Right cardiac atrium (tissue), 5 donors: ENCODE measurements at regions of chr15 and their contacts with region 1.

Region 1: GRCh38 chr15:59492389-59493377 is 54.7 kb downstream of the FAM81A start:
- DNase-seq: peak; percentile 47 to 79 (median 72)
- ATAC-seq: peak; percentile 93 to 95
- H3K4me3 ChIP-seq: no peak overlapping the region
- H3K27ac ChIP-seq: no peak overlapping the region
- H3K4me1 ChIP-seq: no peaks in the 10 kb centered on the region
- H3K27me3 ChIP-seq: no peaks in the 10 kb centered on the region

Region 2: DNA sequence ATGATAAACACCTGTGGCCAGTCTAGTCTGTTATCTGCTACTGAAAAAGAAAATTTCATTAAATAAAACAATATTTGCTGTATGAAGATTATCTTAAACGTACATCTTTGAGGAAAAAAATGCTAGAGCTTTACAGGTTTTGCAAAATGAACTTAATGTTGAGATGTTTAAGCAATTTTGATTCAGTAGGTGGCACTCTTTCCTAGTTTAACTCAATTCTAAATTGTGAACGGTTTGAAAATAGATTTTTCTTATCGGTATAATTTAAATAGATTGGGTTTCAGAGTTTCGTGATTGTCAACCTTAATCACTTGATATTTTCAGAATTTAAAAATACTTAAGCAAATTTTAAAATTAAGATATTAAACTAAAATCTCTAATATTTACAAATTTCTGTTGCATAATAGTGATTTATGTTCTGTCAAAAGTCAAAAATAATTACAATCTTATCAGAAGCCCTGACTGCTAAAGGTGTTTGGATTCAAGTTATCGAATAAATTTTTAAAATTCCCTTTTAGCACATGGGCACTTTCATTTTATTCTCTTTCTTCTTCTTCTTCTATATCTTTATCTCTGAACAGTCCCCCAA is 512.2 kb before region 1 on chr15:
- intact Hi-C with region 1: loop called (anchors 2 to 10 kb)
- DNase-seq: no peak
- ATAC-seq: no peak
- H3K4me3 ChIP-seq: no peak overlapping the region
- H3K27ac ChIP-seq: no peak overlapping the region
- H3K4me1 ChIP-seq: no peaks in the 10 kb centered on the region
- H3K27me3 ChIP-seq: no peaks in the 10 kb centered on the region

Region 3: GRCh38 chr15:58987489-58988005 is 505.1 kb before region 1 on chr15 and contains the start of gene RNF111:
- intact Hi-C with region 1: loop called in 2 of 4 experiments (anchors 5 to 10 kb)
- DNase-seq: peak; percentile 87 to 95 (median 94)
- ATAC-seq: peak; percentile 97 to 98
- H3K4me3 ChIP-seq: peak within 1 kb of the TSS; percentile 71
- H3K27ac ChIP-seq: peak within 1 kb of the TSS; percentile 85
- H3K4me1 ChIP-seq: no peaks in the 10 kb centered on the region
- H3K27me3 ChIP-seq: no peaks in the 10 kb centered on the region
- total RNA-seq, gene RNF111: 22.6 to 29.4 (median 25.0) TPM

Region 4: GRCh38 chr15:59160880-59161593 is 331.6 kb before region 1 on chr15:
- intact Hi-C with region 1: loop called in 2 of 4 experiments (anchors 5 to 10 kb)
- DNase-seq: no peak
- ATAC-seq: no peak
- H3K4me3 ChIP-seq: no peak overlapping the region
- H3K27ac ChIP-seq: no peak overlapping the region
- H3K4me1 ChIP-seq: no peaks in the 10 kb centered on the region
- H3K27me3 ChIP-seq: no peaks in the 10 kb centered on the region

Region 5: DNA sequence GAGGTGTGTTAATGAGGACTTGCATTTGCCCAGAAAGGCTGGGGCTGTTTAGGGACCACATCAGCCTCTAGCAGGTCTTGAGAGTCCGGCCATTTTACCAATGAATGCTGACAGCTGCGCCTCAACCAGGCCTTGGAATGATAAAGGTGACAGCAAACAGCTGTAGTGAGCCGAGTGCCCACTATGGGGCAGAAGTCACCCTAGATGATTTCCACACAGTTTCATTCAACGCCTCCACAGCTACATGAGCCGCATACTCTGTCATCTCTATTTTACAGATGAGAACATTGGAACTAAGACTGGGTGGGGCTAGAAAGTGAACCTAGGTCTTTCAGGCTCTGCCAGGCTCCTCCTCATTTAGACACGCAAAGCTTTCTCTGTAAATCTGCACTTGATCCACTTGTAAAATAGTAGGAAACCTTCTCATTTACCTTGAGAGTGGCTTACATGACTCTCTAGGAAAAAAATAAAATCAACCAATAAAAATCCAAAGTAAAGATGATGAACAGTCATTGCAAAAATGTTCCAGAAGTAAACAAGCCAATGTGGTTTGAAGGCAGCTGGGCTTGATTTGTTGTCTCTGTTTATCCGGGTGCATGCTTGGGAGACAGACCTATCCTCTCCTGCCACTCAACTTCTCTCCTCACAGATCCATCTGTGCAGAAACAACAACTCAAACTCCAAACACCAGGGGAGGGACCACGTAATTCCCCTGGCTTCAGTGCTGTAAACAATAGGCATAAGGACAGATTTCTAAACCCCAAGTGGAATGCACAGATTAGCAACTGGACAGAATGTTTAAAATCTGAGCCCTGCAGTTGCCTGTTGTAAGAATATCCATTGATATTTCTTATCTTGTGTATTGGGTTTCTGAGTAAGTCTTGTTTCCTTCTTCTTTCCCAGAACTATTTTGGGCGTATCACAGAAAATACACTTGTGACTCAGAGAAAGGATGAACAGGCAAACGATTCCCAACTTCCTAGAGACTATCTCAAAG is 317.6 kb before region 1 on chr15:
- intact Hi-C with region 1: loop called in 1 of 4 experiments (anchors 10 kb)
- DNase-seq: peak; percentile 39 to 75 (median 72)
- ATAC-seq: peak; percentile 86 to 89
- H3K4me3 ChIP-seq: no peak overlapping the region
- H3K27ac ChIP-seq: no peak overlapping the region
- H3K4me1 ChIP-seq: peaks cover 2% of the 10 kb centered on the region
- H3K27me3 ChIP-seq: no peaks in the 10 kb centered on the region

Region 6: DNA sequence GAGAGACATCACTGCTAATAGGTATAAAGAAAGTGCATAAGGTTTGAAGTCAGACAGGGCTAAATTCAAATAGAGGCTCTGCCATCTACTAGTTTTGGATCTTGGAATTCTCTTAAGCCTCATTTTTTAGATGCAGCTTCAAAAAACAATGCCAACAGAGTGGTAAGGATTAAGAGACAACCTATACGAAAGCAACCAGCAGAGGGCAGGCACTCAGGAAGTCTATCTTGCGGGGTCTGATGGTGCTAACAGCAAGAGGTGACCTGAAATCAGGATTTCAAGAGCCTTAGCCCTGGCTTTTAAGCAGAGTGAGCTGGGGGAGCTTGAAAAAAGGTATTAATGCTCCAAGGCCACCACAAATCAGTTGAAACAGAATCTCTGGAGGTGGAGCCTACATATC is 245.3 kb before region 1 on chr15:
- intact Hi-C with region 1: loop called in 3 of 4 experiments (anchors 5 to 10 kb)
- DNase-seq: peak in 2 of 3 donors; percentile 28 to 60
- ATAC-seq: peak; percentile 72 to 82
- H3K4me3 ChIP-seq: no peak overlapping the region
- H3K27ac ChIP-seq: no peak overlapping the region
- H3K4me1 ChIP-seq: peaks cover 2% of the 10 kb centered on the region
- H3K27me3 ChIP-seq: no peaks in the 10 kb centered on the region

Region 7: DNA sequence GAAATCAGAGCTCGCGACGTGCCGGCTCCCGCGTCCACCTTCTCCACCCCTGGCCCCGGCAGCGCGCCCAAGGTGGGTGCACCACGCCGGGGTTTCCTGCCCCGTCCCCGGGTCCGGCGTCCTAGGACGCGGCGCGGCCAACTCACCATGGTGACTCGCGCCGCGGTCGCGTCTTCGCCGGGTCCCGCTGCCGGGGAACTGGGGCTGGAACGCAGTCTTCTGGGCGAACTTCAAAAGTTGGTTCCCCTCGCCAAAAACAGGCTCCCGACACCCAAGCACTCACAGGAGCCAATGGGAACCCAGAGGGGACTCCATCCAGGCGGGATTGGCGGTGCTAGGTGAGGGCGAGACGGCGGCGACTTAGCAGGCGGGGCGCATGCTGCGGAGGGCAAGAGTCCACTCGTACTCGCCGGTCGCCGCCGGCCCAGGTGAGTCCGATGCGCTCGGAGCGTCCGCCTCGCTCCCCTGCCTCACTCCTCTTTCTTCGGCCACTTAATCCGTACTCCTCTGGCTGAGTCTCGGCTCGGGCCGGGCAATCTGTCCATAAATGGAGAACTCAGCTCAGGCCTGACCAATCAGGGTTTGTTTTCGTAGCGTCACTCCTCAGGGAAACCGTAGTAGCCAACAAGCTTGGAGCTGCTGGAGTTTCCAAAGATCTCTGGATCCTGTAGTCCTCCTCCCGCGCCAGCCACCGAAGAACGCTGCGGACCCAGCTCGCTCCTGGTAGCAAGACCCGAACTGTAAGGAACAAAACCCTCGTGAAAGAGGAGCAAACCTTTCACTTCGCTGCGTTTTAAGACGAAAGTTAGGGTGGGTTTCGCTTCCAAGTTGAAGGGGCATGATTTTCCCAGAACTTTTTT is 120.1 kb before region 1 on chr15 and contains the start of gene MYO1E:
- intact Hi-C with region 1: loop called in 2 of 4 experiments (anchors 10 kb)
- DNase-seq: peak; percentile 86 to 92 (median 90)
- ATAC-seq: peak; percentile 98
- H3K4me3 ChIP-seq: peak within 1 kb of the TSS; percentile 81
- H3K27ac ChIP-seq: peak within 1 kb of the TSS; percentile 92
- H3K4me1 ChIP-seq: no peaks in the 10 kb centered on the region
- H3K27me3 ChIP-seq: no peaks in the 10 kb centered on the region
- total RNA-seq, gene MYO1E: 19.8 to 28.5 (median 24.0) TPM